Mammary epithelial cell (primary cell): ENCODE measurements at regions of chr5 and their contacts with region 1.

Region 1: GRCh38 chr5:177276886-177277285 is 26.6 kb downstream of the RAB24 start:
- DNase-seq: no peak
- H3K4me3 ChIP-seq: no peak overlapping the region
- H3K27ac ChIP-seq: no peak overlapping the region
- H3K4me1 ChIP-seq: no peaks in the 10 kb centered on the region
- H3K27me3 ChIP-seq: no peaks in the 10 kb centered on the region
- CTCF ChIP-seq: no peak

Region 2: GRCh38 chr5:176948458-176948857 is 328.4 kb before region 1 on chr5:
- CTCF ChIA-PET with region 1: no interaction called
- dilution Hi-C with region 1: no loop called
- in situ Hi-C with region 1: no loop called
- intact Hi-C with region 1: no loop called
- DNase-seq: no peak
- H3K4me3 ChIP-seq: no peak overlapping the region
- H3K27ac ChIP-seq: no peak overlapping the region
- H3K4me1 ChIP-seq: no peaks in the 10 kb centered on the region
- H3K27me3 ChIP-seq: no peaks in the 10 kb centered on the region
- CTCF ChIP-seq: no peak

Region 3: GRCh38 chr5:177189416-177189815 is 87.5 kb before region 1 on chr5:
- CTCF ChIA-PET with region 1: no interaction called
- dilution Hi-C with region 1: loop called (anchors 10 kb)
- in situ Hi-C with region 1: no loop called
- intact Hi-C with region 1: no loop called
- DNase-seq: no peak
- H3K4me3 ChIP-seq: no peak overlapping the region
- H3K27ac ChIP-seq: no peak overlapping the region
- H3K4me1 ChIP-seq: peaks cover 12% of the 10 kb centered on the region
- H3K27me3 ChIP-seq: no peaks in the 10 kb centered on the region
- CTCF ChIP-seq: no peak